ENCODE measurements at regions of chr14 and their contacts with region 1.

Region 1: GRCh38 chr14:34331728-34332623 is 130.1 kb downstream of the SPTSSA start:
- DNase-seq: peak; percentile 80
- ATAC-seq: peak; percentile 93
- H3K4me3 Mint-ChIP-seq: no peak overlapping the region
- H3K27ac Mint-ChIP-seq: peak overlapping the region; percentile 69
- H3K4me1 Mint-ChIP-seq: peaks cover 11% of the 10 kb centered on the region
- H3K27me3 Mint-ChIP-seq: no peaks in the 10 kb centered on the region
- CTCF ChIP-seq: peak; percentile 87

Region 2: DNA sequence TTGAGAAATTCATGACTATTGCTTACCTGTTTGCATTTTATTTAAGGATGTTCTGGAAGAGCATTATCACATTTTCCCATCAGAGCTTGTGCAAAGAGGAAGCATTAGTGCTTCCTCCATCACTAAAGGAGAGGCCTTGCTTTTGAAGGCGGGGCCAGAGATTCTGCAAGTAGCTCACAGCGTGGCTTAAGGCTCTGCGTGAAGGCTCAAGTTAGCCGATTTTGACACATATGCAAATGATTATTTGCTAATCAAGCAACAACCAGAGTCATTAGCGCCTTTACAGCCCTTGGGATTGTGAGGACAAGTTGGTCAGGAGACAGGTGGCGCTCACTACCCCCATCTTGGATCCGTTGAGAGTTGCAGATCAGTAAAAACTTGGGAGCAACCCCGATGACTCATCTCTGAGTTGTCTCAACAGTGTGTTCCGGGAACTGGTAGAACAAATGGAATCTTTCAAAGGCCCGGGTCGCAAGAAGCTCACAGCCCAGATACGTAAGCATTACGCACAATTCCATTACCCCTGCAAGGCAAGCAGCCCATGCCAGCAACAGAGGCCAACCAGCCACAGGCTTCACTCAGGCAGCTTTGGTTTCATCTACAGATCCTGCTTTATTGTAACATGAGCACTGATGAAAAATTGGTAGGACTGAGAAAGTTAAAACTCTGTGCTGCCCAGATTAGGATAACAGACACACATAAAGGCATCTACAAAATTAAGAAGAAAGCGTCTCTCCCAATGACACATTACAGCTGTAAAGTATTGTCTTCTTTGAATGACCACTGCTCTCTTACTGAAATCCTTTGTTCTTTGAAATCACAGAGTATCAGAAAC is 164.9 kb after region 1 on chr14:
- CTCF ChIA-PET with region 1: interaction called, 23 read pairs
- POLR2A ChIA-PET with region 1: no interaction called
- DNase-seq: peak; percentile 45
- ATAC-seq: peak; percentile 92
- H3K4me3 Mint-ChIP-seq: no peak overlapping the region
- H3K27ac Mint-ChIP-seq: peak overlapping the region; percentile 89
- H3K4me1 Mint-ChIP-seq: peaks cover 16% of the 10 kb centered on the region
- H3K27me3 Mint-ChIP-seq: no peaks in the 10 kb centered on the region
- CTCF ChIP-seq: no peak